ENCODE measurements at regions of chr13 and their contacts with region 1.

Region 1: GRCh38 chr13:111202745-111203144 is 87.6 kb downstream of the ARHGEF7 start:
- DNase-seq: peak in 1 of 2 donors; percentile 63
- ATAC-seq: peak; percentile 57 to 64 (median 58)
- H3K4me3 ChIP-seq: no peak overlapping the region
- H3K4me3 Mint-ChIP-seq: no peak overlapping the region
- H3K27ac ChIP-seq: no peak overlapping the region
- H3K27ac Mint-ChIP-seq: peak overlapping the region; percentile 68 to 77
- H3K4me1 ChIP-seq: peaks cover 23% of the 10 kb centered on the region
- H3K4me1 Mint-ChIP-seq: peaks cover 70 to 80% of the 10 kb centered on the region in 2 donors
- H3K27me3 ChIP-seq: no peaks in the 10 kb centered on the region
- H3K27me3 Mint-ChIP-seq: no peaks in the 10 kb centered on the region
- CTCF ChIP-seq: no peak

Region 2: GRCh38 chr13:111184458-111185401 is 18.0 kb before region 1 on chr13:
- intact Hi-C with region 1: loop called (anchors 2 kb)
- DNase-seq: peak in 1 of 2 donors; percentile 75
- ATAC-seq: peak; percentile 67 to 75 (median 75)
- H3K4me3 ChIP-seq: peak overlapping the region; percentile 11
- H3K4me3 Mint-ChIP-seq: peak overlapping the region; percentile 89
- H3K27ac ChIP-seq: peak overlapping the region; percentile 60
- H3K27ac Mint-ChIP-seq: peak overlapping the region; percentile 89
- H3K4me1 ChIP-seq: peaks cover 65% of the 10 kb centered on the region
- H3K4me1 Mint-ChIP-seq: peaks cover 93 to 97% of the 10 kb centered on the region in 2 donors
- H3K27me3 ChIP-seq: no peaks in the 10 kb centered on the region
- H3K27me3 Mint-ChIP-seq: no peaks in the 10 kb centered on the region
- CTCF ChIP-seq: no peak

Region 3: GRCh38 chr13:111658145-111659100 is 455.7 kb after region 1 on chr13:
- intact Hi-C with region 1: no loop called
- DNase-seq: no peak
- ATAC-seq: no peak
- H3K4me3 ChIP-seq: no peak overlapping the region
- H3K4me3 Mint-ChIP-seq: no peak overlapping the region
- H3K27ac ChIP-seq: no peak overlapping the region
- H3K27ac Mint-ChIP-seq: no peak overlapping the region
- H3K4me1 ChIP-seq: no peaks in the 10 kb centered on the region
- H3K4me1 Mint-ChIP-seq: no peaks in the 10 kb centered on the region
- H3K27me3 ChIP-seq: no peaks in the 10 kb centered on the region
- H3K27me3 Mint-ChIP-seq: peaks cover 8 to 24% of the 10 kb centered on the region in 2 donors
- CTCF ChIP-seq: no peak

Measured in natural killer cell (primary cell).